HAP-1 (cell line): ENCODE measurements at regions of chr20 and their contacts with region 1.

Region 1: GRCh38 chr20:33653218-33653899 is 8.8 kb upstream of the C20orf144 start:
- DNase-seq: peak; percentile 58 to 84
- H3K4me3 ChIP-seq: no peak overlapping the region
- H3K4me1 ChIP-seq: no peaks in the 10 kb centered on the region
- H3K27me3 ChIP-seq: no peaks in the 10 kb centered on the region

Region 2: DNA sequence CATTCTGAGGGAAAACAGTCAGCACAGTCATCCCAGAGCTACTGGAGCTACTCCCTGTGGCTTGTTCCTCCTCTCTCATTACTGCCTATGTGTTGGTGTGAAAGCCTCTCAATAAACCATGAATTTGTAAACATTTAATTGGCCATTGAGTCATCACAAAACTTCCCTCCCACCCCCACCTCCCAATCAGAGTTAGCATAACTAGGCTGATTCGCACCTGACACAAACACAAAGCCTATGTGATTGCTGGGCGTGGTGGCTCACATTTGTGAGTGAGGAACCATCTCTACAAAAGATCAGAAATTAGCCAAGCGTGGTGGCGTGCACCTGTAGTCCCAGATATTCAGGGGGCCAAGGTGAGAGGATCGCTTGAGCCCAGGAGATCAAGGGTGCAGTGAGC is 192.6 kb before region 1 on chr20:
- in situ Hi-C with region 1: loop called (anchors 5 kb)
- DNase-seq: no peak
- H3K4me3 ChIP-seq: no peak overlapping the region
- H3K4me1 ChIP-seq: no peaks in the 10 kb centered on the region
- H3K27me3 ChIP-seq: no peaks in the 10 kb centered on the region

Region 3: GRCh38 chr20:33477386-33478234 is 175.7 kb before region 1 on chr20:
- in situ Hi-C with region 1: no loop called
- DNase-seq: no peak
- H3K4me3 ChIP-seq: no peak overlapping the region
- H3K4me1 ChIP-seq: no peaks in the 10 kb centered on the region
- H3K27me3 ChIP-seq: no peaks in the 10 kb centered on the region

Region 4: DNA sequence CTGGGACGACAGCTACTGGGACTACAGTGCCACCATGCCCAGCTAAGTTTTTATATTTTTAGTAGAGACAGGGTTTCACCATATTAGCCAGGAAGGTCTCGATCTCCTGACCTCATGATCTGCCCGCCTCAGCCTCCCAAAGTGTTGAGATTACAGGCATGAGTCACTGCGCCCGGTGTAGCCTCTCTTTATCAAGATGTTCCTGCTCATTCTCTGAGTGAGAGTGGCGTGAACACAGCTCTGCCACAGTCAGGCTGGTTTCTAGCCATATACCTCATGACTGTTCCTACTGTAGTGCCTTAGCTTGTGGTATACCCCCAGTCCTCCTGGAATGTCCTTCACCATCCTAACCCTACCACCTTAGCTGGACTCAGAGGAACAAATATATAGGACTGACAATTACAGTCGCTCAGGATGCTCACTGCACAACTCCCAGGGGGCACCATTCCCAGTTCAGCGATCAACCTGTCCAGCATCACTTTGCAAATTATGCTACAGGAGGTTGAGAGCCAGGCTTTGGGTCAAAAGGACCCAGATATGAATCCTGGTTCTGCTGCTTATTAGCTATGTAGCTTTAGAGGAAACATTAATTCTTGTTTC is 244.1 kb after region 1 on chr20:
- in situ Hi-C with region 1: no loop called
- DNase-seq: no peak
- H3K4me3 ChIP-seq: no peak overlapping the region
- H3K4me1 ChIP-seq: no peaks in the 10 kb centered on the region
- H3K27me3 ChIP-seq: no peaks in the 10 kb centered on the region